Transverse colon (tissue), 4 donors: ENCODE measurements at regions of chr12 and their contacts with region 1.

Region 1: GRCh38 chr12:51505360-51506105 is 80.9 kb downstream of the SLC4A8 start:
- DNase-seq: no peak
- H3K4me3 ChIP-seq: no peak overlapping the region
- H3K27ac ChIP-seq: no peak overlapping the region
- H3K4me1 ChIP-seq: no peaks in the 10 kb centered on the region
- H3K27me3 ChIP-seq: no peaks in the 10 kb centered on the region
- CTCF ChIP-seq: no peak
- EP300 ChIP-seq: no peak
- POLR2A ChIP-seq: no peak

Region 2: GRCh38 chr12:51270067-51270970 is 235.2 kb before region 1 on chr12 and contains the start of gene SMAGP:
- in situ Hi-C with region 1: no loop called
- intact Hi-C with region 1: no loop called
- DNase-seq: peak; percentile 89
- H3K4me3 ChIP-seq: peak within 1 kb of the TSS; percentile 55 to 80 (median 66)
- H3K27ac ChIP-seq: peak within 1 kb of the TSS; percentile 89 to 95 (median 92)
- H3K4me1 ChIP-seq: peaks cover 0 to 36% (median 22%) of the 10 kb centered on the region in 4 donors
- H3K27me3 ChIP-seq: peaks cover 4% of the 10 kb centered on the region
- CTCF ChIP-seq: no peak
- EP300 ChIP-seq: peak; percentile 64
- POLR2A ChIP-seq: peak; percentile 73
- total RNA-seq, gene SMAGP: 29.5 to 144 (median 104) TPM

Region 3: GRCh38 chr12:51441583-51441982 is 64.0 kb before region 1 on chr12:
- in situ Hi-C with region 1: loop called in 1 of 4 experiments (anchors 10 kb)
- intact Hi-C with region 1: no loop called
- DNase-seq: no peak
- H3K4me3 ChIP-seq: no peak overlapping the region
- H3K27ac ChIP-seq: no peak overlapping the region
- H3K4me1 ChIP-seq: no peaks in the 10 kb centered on the region
- H3K27me3 ChIP-seq: no peaks in the 10 kb centered on the region
- CTCF ChIP-seq: no peak
- EP300 ChIP-seq: no peak
- POLR2A ChIP-seq: no peak